ENCODE measurements at regions of chr18 and their contacts with region 1.

Region 1: GRCh38 chr18:40687399-40687798 is 1267.6 kb upstream of the PIK3C3 start:
- DNase-seq: no peak
- ATAC-seq: no peak
- H3K4me3 ChIP-seq: no peak overlapping the region
- H3K27ac ChIP-seq: no peak overlapping the region
- H3K4me1 ChIP-seq: no peaks in the 10 kb centered on the region
- H3K27me3 ChIP-seq: no peaks in the 10 kb centered on the region
- CTCF ChIP-seq: no peak
- EP300 ChIP-seq: no peak
- POLR2A ChIP-seq: no peak
- RAD21 ChIP-seq: no peak

Region 2: DNA sequence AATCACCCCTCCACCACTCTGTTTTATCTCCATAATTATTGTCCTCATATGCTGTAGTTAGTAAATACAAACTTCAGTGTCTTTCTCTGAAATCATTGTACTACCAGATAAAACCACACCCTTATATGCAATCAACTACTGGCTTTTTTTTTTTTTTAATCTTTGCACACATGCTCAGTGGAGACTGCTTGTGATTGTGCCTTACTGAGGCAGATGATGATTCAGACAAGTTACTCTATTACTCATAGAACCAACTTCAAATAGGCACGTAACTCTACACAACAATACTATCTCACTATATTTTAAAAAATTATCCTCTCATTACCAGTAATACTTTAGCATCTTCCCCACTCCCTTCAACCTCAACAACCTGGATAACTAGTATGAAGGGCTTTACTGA is 10.7 kb before region 1 on chr18:
- CTCF ChIA-PET with region 1: no interaction called
- POLR2A ChIA-PET with region 1: no interaction called
- in situ Hi-C with region 1: no loop called
- intact Hi-C with region 1: loop called (anchors 1 kb)
- DNase-seq: no peak
- ATAC-seq: no peak
- H3K4me3 ChIP-seq: no peak overlapping the region
- H3K27ac ChIP-seq: no peak overlapping the region
- H3K4me1 ChIP-seq: no peaks in the 10 kb centered on the region
- H3K27me3 ChIP-seq: no peaks in the 10 kb centered on the region
- CTCF ChIP-seq: no peak
- EP300 ChIP-seq: no peak
- POLR2A ChIP-seq: no peak
- RAD21 ChIP-seq: no peak

Measured in K562 (cell line).